ENCODE measurements at regions of chr15 and their contacts with region 1.

Region 1: GRCh38 chr15:34342737-34343575 is at the starts of genes NOP10 and NUTM1:
- DNase-seq: peak; percentile 96
- ATAC-seq: peak; percentile 85
- H3K4me3 Mint-ChIP-seq: no peak within 1 kb of the TSS
- H3K27ac Mint-ChIP-seq: peak within 1 kb of the TSS; percentile 67
- H3K4me1 Mint-ChIP-seq: peaks cover 29% of the 10 kb centered on the region
- H3K27me3 Mint-ChIP-seq: peaks cover 2% of the 10 kb centered on the region
- total RNA-seq, gene NOP10: 166 to 249 TPM
- total RNA-seq, gene NUTM1: not detected

Region 2: GRCh38 chr15:34241372-34242330 is 101.3 kb before region 1 on chr15:
- CTCF ChIA-PET with region 1: interaction called, 10 read pairs
- DNase-seq: peak; percentile 56
- ATAC-seq: peak; percentile 77
- H3K4me3 Mint-ChIP-seq: no peak overlapping the region
- H3K27ac Mint-ChIP-seq: peak overlapping the region; percentile 41
- H3K4me1 Mint-ChIP-seq: peaks cover 30% of the 10 kb centered on the region
- H3K27me3 Mint-ChIP-seq: no peaks in the 10 kb centered on the region

Region 3: DNA sequence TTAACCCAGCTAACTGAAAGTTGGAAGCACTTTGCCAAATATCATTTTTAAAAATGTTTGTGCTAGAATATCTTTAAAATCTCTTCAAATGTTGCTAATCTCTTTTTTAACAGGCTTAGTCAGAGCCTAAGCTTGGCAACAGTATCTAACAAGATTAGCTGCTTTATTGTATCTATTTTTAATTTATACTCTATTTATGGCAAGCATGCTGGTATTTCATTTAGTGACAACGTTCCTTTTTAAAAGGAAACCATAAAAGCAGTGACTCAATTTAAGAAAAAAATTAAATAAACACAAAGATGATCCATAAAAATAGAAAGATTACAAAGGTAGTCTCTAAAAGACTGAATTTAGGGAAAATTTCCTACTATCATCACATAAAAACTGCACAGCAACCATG is 45.9 kb before region 1 on chr15:
- CTCF ChIA-PET with region 1: no interaction called
- DNase-seq: no peak
- ATAC-seq: no peak
- H3K4me3 Mint-ChIP-seq: no peak overlapping the region
- H3K27ac Mint-ChIP-seq: no peak overlapping the region
- H3K4me1 Mint-ChIP-seq: peaks cover 6% of the 10 kb centered on the region
- H3K27me3 Mint-ChIP-seq: no peaks in the 10 kb centered on the region

Region 4: GRCh38 chr15:34327906-34328305 is 15.1 kb before region 1 on chr15:
- CTCF ChIA-PET with region 1: interaction called, 17 read pairs
- DNase-seq: no peak
- ATAC-seq: no peak
- H3K4me3 Mint-ChIP-seq: peak overlapping the region; percentile 59
- H3K27ac Mint-ChIP-seq: peak overlapping the region; percentile 78
- H3K4me1 Mint-ChIP-seq: peaks cover 64% of the 10 kb centered on the region
- H3K27me3 Mint-ChIP-seq: no peaks in the 10 kb centered on the region

Region 5: GRCh38 chr15:34362047-34362773 is 19.3 kb after region 1 on chr15:
- CTCF ChIA-PET with region 1: interaction called, 55 read pairs
- DNase-seq: no peak
- ATAC-seq: no peak
- H3K4me3 Mint-ChIP-seq: no peak overlapping the region
- H3K27ac Mint-ChIP-seq: no peak overlapping the region
- H3K4me1 Mint-ChIP-seq: peaks cover 22% of the 10 kb centered on the region
- H3K27me3 Mint-ChIP-seq: no peaks in the 10 kb centered on the region

Region 6: DNA sequence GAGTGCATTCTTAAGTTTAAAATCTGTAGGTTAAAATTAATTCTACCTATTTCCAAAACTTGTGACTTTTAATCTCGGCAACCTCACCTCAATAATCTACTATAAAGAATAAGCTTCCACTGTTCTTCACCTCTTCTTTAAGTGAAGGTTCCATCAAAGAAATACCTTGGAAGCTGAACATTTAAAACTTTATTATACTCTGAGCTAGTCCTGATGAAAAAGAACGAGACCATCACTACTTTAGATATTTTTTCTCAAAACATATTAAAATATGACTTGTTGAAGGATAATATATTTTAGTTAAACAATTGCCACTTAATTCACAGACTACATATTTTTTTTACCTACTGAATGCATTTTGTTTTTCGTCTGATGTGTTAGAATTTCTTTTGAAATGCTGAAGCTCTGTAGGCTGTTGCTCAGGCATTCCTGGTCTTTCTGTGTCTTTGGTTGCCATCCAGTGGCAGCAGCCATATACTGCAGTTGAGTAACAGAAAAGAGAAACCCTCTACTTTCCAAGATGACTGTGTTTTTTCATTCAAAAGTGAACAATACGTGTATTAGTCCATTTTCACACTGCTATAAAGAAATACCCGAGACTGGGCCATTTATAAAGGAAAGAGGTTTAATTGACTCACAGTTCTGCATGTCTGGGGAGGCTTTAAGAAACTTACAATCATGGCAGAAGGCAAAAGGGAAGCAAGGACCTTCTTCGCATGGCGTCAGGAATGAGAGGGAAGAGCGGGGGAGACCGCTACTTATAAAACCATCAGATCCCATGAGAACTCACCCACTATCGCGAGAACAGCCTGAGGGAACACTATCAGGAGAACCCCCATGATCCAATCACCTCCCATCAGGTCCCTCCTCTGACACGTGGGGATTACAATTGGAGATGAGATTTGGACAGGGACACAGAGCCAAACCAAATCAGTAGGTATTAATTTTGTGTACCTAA is 245.0 kb after region 1 on chr15:
- CTCF ChIA-PET with region 1: interaction called, 10 read pairs
- DNase-seq: peak; percentile 80
- ATAC-seq: peak; percentile 42
- H3K4me3 Mint-ChIP-seq: peak overlapping the region; percentile 77
- H3K27ac Mint-ChIP-seq: peak overlapping the region; percentile 63
- H3K4me1 Mint-ChIP-seq: peaks cover 17% of the 10 kb centered on the region
- H3K27me3 Mint-ChIP-seq: peaks cover 22% of the 10 kb centered on the region

Measured in activated CD8-positive, alpha-beta memory T cell treated with anti-CD3 and anti-CD28 coated beads, Interleukin-2, amount 10 ng/mL, durations not matched to agents 7 days and 5 days (primary cell).